ENCODE measurements at regions of chr19 and their contacts with region 1.

Region 1: DNA sequence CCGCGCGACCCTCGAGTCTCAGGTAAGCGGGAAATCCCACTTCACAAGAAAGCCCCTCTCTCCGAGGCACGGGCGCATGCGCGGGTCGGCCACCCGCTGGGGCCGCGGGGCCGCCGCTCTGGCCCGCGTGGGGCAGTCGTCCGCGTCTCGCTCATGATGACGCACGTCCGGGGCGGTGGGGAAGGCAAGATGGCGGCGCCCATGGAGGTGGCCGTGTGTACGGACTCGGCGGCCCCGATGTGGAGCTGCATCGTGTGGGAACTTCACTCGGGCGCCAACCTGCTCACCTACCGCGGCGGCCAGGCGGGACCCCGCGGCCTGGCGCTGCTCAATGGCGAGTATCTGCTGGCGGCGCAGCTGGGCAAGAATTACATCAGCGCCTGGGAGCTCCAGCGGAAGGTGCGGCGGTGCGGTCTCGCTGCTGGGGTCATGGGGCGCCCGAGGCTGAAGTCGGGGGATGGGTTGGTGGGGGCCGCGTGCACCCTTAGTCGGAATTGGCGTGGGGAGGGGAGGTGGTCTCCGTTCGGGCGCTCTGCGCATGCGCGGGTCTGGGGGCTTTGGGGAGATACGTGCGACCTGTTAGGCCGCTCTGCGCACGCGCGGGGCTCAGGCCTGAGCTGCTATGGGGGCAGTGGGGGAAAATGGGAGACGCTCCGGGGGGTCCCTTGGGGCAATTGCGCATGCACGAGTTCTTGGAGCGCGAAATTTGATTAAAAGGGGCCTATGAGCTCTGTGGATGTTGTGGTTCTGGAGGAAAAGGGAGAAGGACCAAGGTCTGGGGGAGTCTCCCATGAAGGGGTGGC is at the start of gene WDR18:
- DNase-seq: peak; percentile 94 to 95 (median 94)
- H3K4me3 ChIP-seq: peak within 1 kb of the TSS; percentile 94
- H3K27ac ChIP-seq: peak within 1 kb of the TSS; percentile 13 to 80
- H3K4me1 ChIP-seq: peaks cover 1% of the 10 kb centered on the region
- H3K27me3 ChIP-seq: no peaks in the 10 kb centered on the region
- CTCF ChIP-seq: peak; percentile 26 to 70 (median 61)
- EP300 ChIP-seq: no peak
- POLR2A ChIP-seq: peak; percentile 57
- total RNA-seq, gene WDR18: 19.4 to 45.6 (median 31.2) TPM

Region 2: GRCh38 chr19:771332-771785 is 213.0 kb before region 1 on chr19:
- intact Hi-C with region 1: loop called in 1 of 4 experiments (anchors 10 kb)
- DNase-seq: no peak
- H3K4me3 ChIP-seq: no peak overlapping the region
- H3K27ac ChIP-seq: no peak overlapping the region
- H3K4me1 ChIP-seq: no peaks in the 10 kb centered on the region
- H3K27me3 ChIP-seq: no peaks in the 10 kb centered on the region
- CTCF ChIP-seq: no peak
- EP300 ChIP-seq: no peak
- POLR2A ChIP-seq: no peak

Region 3: DNA sequence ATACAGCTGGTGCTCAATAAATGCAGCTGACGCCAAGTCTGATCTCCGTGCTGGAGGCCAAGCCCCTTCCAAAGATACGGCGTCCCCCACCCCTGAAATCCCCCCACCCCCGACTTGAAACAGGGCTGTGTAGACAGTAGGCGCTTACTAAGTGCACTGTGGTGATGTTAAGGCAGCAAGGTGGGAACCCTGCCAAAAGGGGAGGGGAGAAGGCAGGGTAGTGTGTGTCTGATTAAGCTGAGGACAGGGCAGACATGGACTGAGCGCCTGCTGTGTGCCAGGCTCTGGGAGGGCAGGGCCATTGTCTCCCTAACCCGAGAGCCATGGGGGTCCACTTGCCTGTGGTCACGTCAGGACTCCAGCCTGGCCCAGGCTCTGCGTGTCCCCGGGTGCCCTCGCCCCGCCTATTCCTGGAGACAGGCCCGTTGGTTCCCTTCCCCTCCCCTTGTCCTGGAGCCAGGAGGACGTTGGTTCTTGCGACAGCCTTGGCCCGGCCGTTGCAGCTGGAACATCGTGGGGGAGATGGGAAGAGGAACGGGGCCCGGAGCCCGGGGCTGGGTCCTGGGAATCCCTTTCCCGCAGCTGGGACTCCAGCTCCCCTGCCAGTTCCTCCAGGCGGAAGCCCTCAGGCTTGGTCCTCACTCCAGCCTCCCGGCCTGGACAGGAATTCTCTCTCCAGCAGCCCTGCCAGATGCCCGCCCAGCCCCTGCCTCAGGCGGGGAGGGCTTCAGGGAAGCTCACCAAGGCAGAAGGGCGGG is 134.0 kb before region 1 on chr19:
- intact Hi-C with region 1: loop called in 2 of 4 experiments (anchors 10 kb)
- DNase-seq: peak; percentile 91 to 96 (median 93)
- H3K4me3 ChIP-seq: no peak overlapping the region
- H3K27ac ChIP-seq: peak overlapping the region; percentile 57 to 83
- H3K4me1 ChIP-seq: peaks cover 5% of the 10 kb centered on the region
- H3K27me3 ChIP-seq: peaks cover 5% of the 10 kb centered on the region
- CTCF ChIP-seq: no peak
- EP300 ChIP-seq: peak; percentile 88
- POLR2A ChIP-seq: no peak

Region 4: GRCh38 chr19:860481-861101 is 123.8 kb before region 1 on chr19:
- intact Hi-C with region 1: loop called in 3 of 4 experiments (anchors 5 to 10 kb)
- DNase-seq: peak in 3 of 5 donors; percentile 71 to 73 (median 71)
- H3K4me3 ChIP-seq: peak overlapping the region; percentile 25
- H3K27ac ChIP-seq: no peak overlapping the region
- H3K4me1 ChIP-seq: peaks cover 9% of the 10 kb centered on the region
- H3K27me3 ChIP-seq: peaks cover 4% of the 10 kb centered on the region
- CTCF ChIP-seq: no peak
- EP300 ChIP-seq: no peak
- POLR2A ChIP-seq: no peak

Measured in ovary (tissue), 10 donors.